ENCODE measurements at regions of chr19 and their contacts with region 1.

Region 1: DNA sequence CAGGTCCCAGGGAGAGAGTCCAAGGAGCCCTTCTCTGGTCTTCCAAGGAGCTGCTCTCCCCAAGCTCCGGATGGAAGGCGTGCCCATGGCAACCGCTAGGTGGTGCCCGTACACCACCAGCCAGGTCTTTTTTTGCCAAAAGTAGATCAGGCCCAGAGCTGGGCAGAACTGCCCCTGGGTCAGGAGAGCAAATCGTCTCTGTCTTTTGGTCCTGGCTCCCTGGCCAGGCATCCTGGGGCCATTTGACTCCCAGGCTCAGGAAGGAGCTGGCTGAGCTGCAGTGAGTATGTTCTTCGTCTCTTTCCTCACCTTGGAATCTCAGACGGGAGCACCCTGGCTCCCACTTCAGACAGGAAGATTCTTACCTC is 24.6 kb upstream of the BCL3 start:
- DNase-seq: peak; percentile 76
- ATAC-seq: peak; percentile 92
- H3K4me3 Mint-ChIP-seq: no peak overlapping the region
- H3K27ac Mint-ChIP-seq: no peak overlapping the region
- H3K4me1 Mint-ChIP-seq: peaks cover 40% of the 10 kb centered on the region
- H3K27me3 Mint-ChIP-seq: peaks cover 3% of the 10 kb centered on the region
- CTCF ChIP-seq: peak; percentile 81

Region 2: DNA sequence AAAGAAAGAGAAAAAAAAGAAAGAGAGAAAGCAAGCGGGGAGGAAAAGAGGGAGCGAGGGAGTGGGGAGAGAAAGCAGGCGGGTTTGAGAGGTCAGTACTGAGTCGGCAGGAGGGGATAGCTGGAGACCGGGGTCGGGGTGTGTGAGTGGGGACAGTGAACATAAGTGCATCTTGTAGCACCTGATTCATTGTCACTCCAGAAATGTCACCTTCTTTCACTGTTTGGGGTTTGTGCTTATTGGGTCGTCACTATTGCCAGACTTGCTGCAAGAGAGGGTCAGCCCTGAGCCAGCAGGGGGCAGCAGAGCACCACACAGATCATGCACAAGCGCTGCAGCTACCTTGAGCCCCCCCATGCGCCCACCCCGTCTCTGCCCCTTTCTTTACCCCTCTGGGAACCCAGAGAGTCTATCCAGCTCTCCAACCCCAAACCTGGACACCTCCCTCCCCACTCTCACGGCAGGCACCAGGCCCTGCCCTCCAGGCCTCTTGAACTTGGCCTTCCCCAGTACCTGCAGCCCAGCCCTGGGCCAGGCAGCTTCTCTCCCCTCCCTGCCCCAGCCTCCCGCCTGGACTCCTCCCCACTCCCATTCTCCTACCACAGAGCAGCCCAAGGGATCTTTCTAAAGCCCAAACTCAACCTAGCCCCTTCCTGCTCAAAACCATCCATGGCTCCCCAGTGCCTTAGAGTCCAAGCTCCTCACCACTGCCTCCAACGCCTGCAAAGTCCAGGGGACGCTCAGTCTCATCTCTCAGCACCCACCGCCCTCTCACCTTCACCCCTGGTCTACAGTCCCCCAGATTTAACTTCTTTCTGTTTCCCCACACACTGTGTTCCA is 34.7 kb before region 1 on chr19:
- CTCF ChIA-PET with region 1: interaction called, 57 read pairs
- POLR2A ChIA-PET with region 1: interaction called, 9 read pairs
- intact Hi-C with region 1: loop called (anchors 1 kb)
- DNase-seq: peak; percentile 73
- ATAC-seq: peak; percentile 51
- H3K4me3 Mint-ChIP-seq: no peak overlapping the region
- H3K27ac Mint-ChIP-seq: no peak overlapping the region
- H3K4me1 Mint-ChIP-seq: peaks cover 51% of the 10 kb centered on the region
- H3K27me3 Mint-ChIP-seq: peaks cover 11% of the 10 kb centered on the region
- CTCF ChIP-seq: no peak

Region 3: DNA sequence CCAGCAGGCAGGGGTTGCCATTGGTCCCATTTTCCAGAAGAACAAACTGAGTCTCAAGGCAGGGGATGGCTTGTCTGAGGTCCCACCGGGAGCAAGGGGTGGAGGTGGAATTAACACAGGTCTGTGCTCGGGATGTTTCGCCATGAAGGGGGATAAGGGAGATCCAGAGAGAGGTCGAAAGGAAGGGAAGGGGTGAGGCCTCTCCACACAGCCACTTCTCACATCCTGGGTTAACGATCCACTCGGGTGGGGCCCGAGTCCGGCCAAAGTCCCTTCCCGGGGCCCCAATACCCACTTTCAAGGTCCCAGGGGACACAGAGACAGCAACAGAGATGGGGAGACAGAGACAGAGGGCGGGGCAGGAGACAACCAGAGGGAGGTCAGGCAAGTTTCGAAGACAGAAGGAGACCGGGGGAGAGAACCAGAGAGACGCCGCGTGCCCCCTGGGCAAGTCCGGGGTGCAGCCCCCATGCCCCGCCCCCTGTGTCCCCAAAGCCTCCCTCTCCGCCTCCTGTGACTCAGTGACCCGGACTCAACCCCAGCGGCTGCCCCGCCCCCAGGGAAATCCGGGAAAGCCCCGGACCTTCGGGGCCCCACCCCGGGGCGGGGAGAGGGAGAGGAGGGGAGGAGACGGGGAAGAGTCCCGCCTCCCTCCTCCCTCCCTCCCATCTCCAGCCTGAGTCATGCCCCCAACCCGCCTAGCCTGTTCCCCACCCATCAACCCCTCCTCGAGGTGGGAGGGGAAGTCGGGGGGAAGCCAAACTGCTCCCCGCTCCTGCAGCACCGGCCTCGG is 23.2 kb after region 1 on chr19:
- CTCF ChIA-PET with region 1: interaction called, 16 read pairs
- POLR2A ChIA-PET with region 1: interaction called, 52 read pairs
- intact Hi-C with region 1: loop called (anchors 1 kb)
- DNase-seq: peak; percentile 87
- ATAC-seq: peak; percentile 72
- H3K4me3 Mint-ChIP-seq: peak overlapping the region; percentile 98
- H3K27ac Mint-ChIP-seq: peak overlapping the region; percentile 97
- H3K4me1 Mint-ChIP-seq: peaks cover 56% of the 10 kb centered on the region
- H3K27me3 Mint-ChIP-seq: no peaks in the 10 kb centered on the region
- CTCF ChIP-seq: no peak

Region 4: DNA sequence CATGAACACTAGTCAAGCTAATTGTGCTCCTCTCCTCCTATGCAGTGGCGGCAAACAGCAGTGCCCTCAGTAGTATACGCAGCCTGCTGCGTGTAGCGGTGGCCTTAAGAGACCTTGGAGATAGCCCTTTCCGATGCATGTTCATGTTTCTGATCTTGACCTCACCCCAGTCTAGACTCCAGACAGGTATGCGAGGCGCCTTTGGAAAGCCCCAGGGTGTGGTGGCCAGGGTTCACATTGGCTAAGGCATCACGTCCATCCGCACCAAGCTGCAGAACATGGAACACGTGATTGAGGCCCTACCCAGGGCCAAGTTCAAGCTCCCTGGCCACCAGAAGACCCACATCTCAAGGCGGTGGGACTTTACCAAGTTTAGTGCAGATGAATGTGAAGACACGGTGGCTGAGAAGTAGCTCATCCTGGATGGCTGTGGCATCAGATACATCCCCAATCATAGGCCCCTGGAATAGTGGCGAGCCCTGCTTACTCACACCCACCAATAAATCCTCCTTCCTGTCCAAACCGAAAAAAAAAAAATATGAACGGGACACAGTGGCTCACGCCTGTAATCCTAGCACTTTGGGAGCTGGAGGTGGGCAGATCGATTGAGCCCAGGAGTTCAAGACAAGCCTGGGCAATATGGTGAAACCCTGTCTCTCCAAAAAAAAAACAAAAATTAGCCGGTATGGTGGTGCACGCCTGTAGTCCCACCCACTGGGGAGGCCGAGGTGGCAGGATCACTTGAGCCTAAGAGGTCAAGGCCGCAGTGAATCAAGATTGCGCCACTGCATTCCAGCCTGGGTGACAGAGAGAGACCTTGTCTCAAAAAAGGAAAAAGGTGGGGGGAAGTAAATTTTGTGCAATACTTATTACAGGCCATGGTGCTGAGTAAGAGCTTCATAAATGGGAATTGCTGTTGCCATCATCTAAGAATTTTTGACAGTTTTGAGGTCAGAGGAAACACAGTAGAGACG is 41.3 kb after region 1 on chr19:
- CTCF ChIA-PET with region 1: interaction called, 359 read pairs
- POLR2A ChIA-PET with region 1: interaction called, 89 read pairs
- intact Hi-C with region 1: loop called (anchors 1 kb)
- DNase-seq: no peak
- ATAC-seq: no peak
- H3K4me3 Mint-ChIP-seq: no peak overlapping the region
- H3K27ac Mint-ChIP-seq: no peak overlapping the region
- H3K4me1 Mint-ChIP-seq: peaks cover 41% of the 10 kb centered on the region
- H3K27me3 Mint-ChIP-seq: no peaks in the 10 kb centered on the region
- CTCF ChIP-seq: no peak

Region 5: DNA sequence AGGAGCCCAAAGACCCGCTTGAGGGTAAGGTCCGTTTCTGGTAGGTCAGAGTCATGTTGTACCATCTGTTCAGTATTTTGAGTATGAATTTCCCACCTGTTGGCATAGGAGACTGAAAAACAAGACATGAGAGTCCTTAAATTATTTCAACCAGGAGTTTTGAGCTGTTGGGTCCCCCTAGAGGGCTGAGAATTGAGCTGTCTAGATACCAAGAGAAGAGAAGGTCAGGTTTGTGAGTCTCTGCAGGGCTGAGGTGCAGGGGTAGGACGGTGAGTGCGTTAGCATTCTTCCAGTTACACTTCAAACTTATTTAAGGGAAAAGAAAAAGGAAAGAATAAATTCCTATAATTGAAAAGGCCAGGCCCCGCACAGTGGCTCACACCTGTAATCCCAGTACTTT is 58.8 kb after region 1 on chr19:
- CTCF ChIA-PET with region 1: interaction called, 24 read pairs
- POLR2A ChIA-PET with region 1: no interaction called
- intact Hi-C with region 1: no loop called
- DNase-seq: no peak
- ATAC-seq: no peak
- H3K4me3 Mint-ChIP-seq: no peak overlapping the region
- H3K27ac Mint-ChIP-seq: no peak overlapping the region
- H3K4me1 Mint-ChIP-seq: peaks cover 6% of the 10 kb centered on the region
- H3K27me3 Mint-ChIP-seq: peaks cover 7% of the 10 kb centered on the region
- CTCF ChIP-seq: no peak

Region 6: DNA sequence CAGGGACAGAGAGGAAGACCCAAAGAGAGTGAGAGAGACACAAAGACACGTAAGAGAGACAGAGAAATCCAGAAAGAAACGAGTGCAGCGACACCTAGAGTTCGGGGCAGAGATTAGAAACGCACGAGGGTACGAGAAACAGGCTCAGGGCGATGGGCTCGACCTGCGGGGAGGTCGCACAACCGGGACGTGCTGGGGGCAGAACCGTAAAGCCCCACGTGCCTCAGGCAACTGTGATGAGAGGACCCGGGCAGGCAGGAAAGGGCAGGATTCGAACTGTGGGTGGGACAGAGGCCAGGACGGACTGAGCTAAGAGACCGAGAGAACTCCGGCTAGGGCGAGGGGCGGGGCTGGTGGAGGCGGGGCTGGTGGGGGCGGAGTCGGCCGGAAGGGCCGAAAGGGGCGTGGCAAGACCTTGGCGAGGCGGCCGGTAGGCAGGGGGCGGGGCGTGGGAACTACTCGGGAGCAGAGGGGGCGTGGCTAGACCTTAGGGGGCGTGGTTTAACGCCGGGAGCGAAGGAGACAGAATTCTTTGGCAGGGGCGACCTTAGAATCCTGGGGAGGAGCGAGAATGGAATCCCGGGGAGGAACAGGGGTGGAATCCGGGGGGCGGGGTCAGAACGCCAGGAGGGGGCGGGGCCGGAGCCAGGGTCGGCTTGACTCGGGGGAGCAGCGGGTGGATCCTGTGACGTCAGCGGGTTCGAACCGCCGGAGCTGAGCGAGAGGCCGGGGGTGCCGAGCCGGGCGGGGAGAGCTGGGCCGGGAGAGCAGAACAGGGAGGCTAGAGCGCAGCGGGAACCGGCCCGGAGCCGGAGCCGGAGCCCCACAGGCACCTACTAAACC is 121.9 kb after region 1 on chr19 and contains the start of gene NECTIN2:
- CTCF ChIA-PET with region 1: interaction called, 6 read pairs
- POLR2A ChIA-PET with region 1: interaction called, 3 read pairs
- intact Hi-C with region 1: loop called (anchors 1 kb)
- DNase-seq: peak; percentile 68
- ATAC-seq: peak; percentile 73
- H3K4me3 Mint-ChIP-seq: peak within 1 kb of the TSS; percentile 89
- H3K27ac Mint-ChIP-seq: peak within 1 kb of the TSS; percentile 38
- H3K4me1 Mint-ChIP-seq: peaks cover 31% of the 10 kb centered on the region
- H3K27me3 Mint-ChIP-seq: peaks cover 32% of the 10 kb centered on the region
- CTCF ChIP-seq: no peak
- total RNA-seq, gene NECTIN2: 0.17 and 0.35 TPM in 2 replicates

Region 7: GRCh38 chr19:44954824-44955586 is 231.1 kb after region 1 on chr19 and contains the start of gene CLPTM1:
- CTCF ChIA-PET with region 1: interaction called, 10 read pairs
- POLR2A ChIA-PET with region 1: interaction called, 3 read pairs
- intact Hi-C with region 1: no loop called
- DNase-seq: peak; percentile 85
- ATAC-seq: peak; percentile 89
- H3K4me3 Mint-ChIP-seq: peak within 1 kb of the TSS; percentile 97
- H3K27ac Mint-ChIP-seq: peak within 1 kb of the TSS; percentile 97
- H3K4me1 Mint-ChIP-seq: peaks cover 57% of the 10 kb centered on the region
- H3K27me3 Mint-ChIP-seq: no peaks in the 10 kb centered on the region
- CTCF ChIP-seq: no peak
- total RNA-seq, gene CLPTM1: 87.0 and 92.1 TPM in 2 replicates

Measured in activated B cell treated with CpG ODN at 0.5 μM for 24 hours (primary cell).